Activated CD8-positive, alpha-beta T cell treated with anti-CD3 and anti-CD28 coated beads for 36 hours (primary cell): ENCODE measurements at regions of chr3 and their contacts with region 1.

Region 1: GRCh38 chr3:118884748-118885206 is 149.9 kb downstream of the IGSF11 start:
- DNase-seq: peak; percentile 87
- ATAC-seq: peak; percentile 87
- H3K4me3 Mint-ChIP-seq: no peak overlapping the region
- H3K27ac Mint-ChIP-seq: no peak overlapping the region
- H3K4me1 Mint-ChIP-seq: peaks cover 5% of the 10 kb centered on the region
- H3K27me3 Mint-ChIP-seq: peaks cover 12% of the 10 kb centered on the region
- CTCF ChIP-seq: peak; percentile 92

Region 2: DNA sequence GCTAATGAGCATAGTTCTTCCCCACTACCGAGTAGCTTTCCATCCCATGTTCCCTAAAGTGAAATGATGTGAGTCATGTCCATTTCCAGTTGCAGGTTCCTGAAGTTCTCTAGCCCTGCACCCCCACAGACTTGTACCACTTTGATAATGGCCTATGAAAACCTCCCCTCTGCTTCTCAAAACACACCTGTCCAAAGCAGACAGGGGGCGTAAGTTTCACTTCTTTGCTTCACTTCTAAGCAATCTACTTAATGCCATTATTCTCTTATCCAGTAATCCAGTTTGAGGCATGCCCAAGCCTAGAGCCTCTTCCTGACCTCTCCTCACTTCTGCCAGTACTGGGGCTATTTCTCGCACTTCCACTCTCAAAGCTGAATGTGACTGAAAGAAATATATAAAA is 155.2 kb before region 1 on chr3:
- CTCF ChIA-PET with region 1: no interaction called
- POLR2A ChIA-PET with region 1: no interaction called
- intact Hi-C with region 1: no loop called
- DNase-seq: no peak
- ATAC-seq: no peak
- H3K4me3 Mint-ChIP-seq: no peak overlapping the region
- H3K27ac Mint-ChIP-seq: no peak overlapping the region
- H3K4me1 Mint-ChIP-seq: no peaks in the 10 kb centered on the region
- H3K27me3 Mint-ChIP-seq: no peaks in the 10 kb centered on the region
- CTCF ChIP-seq: no peak

Region 3: GRCh38 chr3:118846176-118846575 is 38.6 kb before region 1 on chr3:
- CTCF ChIA-PET with region 1: no interaction called
- POLR2A ChIA-PET with region 1: no interaction called
- intact Hi-C with region 1: no loop called
- DNase-seq: no peak
- ATAC-seq: no peak
- H3K4me3 Mint-ChIP-seq: no peak overlapping the region
- H3K27ac Mint-ChIP-seq: no peak overlapping the region
- H3K4me1 Mint-ChIP-seq: no peaks in the 10 kb centered on the region
- H3K27me3 Mint-ChIP-seq: no peaks in the 10 kb centered on the region
- CTCF ChIP-seq: no peak

Region 4: DNA sequence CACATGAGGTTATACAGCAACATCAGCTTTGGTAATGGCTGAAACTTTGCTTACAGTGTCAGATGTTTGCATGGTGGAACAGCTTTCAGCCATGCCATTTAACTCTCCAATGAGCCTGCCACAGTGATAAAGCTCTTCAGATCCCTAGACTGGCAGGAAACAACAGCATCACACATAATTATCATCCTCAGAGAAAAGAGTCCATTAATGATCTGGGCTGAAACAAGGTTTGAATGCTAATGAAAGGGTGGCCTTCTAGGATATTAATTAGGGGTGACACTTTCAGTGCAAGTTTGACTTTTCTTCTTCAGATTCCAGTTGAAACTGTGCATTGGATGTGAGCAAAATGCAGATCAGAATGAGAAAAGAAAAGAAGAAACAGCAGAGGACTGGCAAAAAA is 16.7 kb before region 1 on chr3:
- CTCF ChIA-PET with region 1: interaction called, 54 read pairs
- POLR2A ChIA-PET with region 1: no interaction called
- intact Hi-C with region 1: no loop called
- DNase-seq: no peak
- ATAC-seq: no peak
- H3K4me3 Mint-ChIP-seq: no peak overlapping the region
- H3K27ac Mint-ChIP-seq: no peak overlapping the region
- H3K4me1 Mint-ChIP-seq: no peaks in the 10 kb centered on the region
- H3K27me3 Mint-ChIP-seq: peaks cover 18% of the 10 kb centered on the region
- CTCF ChIP-seq: no peak

Region 5: GRCh38 chr3:118955914-118956556 is 71.3 kb after region 1 on chr3:
- CTCF ChIA-PET with region 1: interaction called, 24 read pairs
- POLR2A ChIA-PET with region 1: no interaction called
- intact Hi-C with region 1: no loop called
- DNase-seq: no peak
- ATAC-seq: peak; percentile 50
- H3K4me3 Mint-ChIP-seq: no peak overlapping the region
- H3K27ac Mint-ChIP-seq: peak overlapping the region; percentile 55
- H3K4me1 Mint-ChIP-seq: peaks cover 36% of the 10 kb centered on the region
- H3K27me3 Mint-ChIP-seq: no peaks in the 10 kb centered on the region
- CTCF ChIP-seq: no peak

Region 6: DNA sequence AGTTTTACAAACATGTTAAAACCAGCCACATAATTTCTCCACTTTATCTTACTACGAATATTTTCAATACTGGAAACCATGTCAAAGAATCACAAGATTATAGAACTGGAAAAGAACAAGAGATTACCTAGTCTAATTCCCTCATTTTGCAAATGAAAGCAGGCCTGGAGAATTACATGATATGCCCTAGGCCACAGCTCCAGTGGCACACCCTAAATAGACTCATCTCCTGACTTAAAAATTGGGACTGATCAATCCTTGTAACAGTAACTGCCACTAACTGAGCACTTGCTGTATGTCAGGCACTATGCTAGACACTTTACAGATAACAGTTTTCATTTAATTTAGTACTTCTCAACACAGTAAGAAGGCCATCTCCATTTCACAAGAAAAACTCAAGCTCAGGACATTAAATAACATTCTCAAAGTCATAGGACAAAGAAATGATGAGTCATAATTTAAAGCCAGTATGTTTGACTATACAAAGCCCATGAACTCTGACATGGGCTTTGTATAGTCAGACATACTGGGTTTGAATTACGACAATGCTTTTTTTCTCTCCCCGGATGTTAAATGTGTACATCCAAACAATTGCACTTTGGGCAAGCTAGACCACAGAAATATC is 140.5 kb after region 1 on chr3:
- CTCF ChIA-PET with region 1: interaction called, 305 read pairs
- POLR2A ChIA-PET with region 1: no interaction called
- intact Hi-C with region 1: no loop called
- DNase-seq: no peak
- ATAC-seq: no peak
- H3K4me3 Mint-ChIP-seq: no peak overlapping the region
- H3K27ac Mint-ChIP-seq: no peak overlapping the region
- H3K4me1 Mint-ChIP-seq: peaks cover 1% of the 10 kb centered on the region
- H3K27me3 Mint-ChIP-seq: no peaks in the 10 kb centered on the region
- CTCF ChIP-seq: no peak

Region 7: DNA sequence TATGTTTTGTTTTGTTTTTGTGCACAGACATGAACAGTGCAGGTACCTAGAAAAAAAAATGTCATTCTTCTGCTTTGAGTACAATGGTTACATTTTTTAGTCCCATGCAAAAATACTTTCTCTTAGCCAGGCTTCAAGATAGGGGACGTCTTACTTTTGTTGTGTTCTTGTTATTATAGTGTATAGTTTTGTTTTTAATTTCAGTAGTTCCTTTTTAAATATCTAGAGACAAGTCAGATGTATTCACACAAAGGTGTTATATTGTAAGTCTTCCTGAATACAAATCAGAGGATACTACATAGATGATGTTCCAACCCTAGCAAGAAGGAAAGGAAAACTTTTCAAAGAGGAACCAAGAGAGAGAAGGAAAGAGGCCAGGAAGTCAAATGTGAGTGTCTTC is 178.7 kb after region 1 on chr3:
- CTCF ChIA-PET with region 1: interaction called, 29 read pairs
- POLR2A ChIA-PET with region 1: no interaction called
- intact Hi-C with region 1: no loop called
- DNase-seq: no peak
- ATAC-seq: no peak
- H3K4me3 Mint-ChIP-seq: no peak overlapping the region
- H3K27ac Mint-ChIP-seq: no peak overlapping the region
- H3K4me1 Mint-ChIP-seq: no peaks in the 10 kb centered on the region
- H3K27me3 Mint-ChIP-seq: peaks cover 4% of the 10 kb centered on the region
- CTCF ChIP-seq: no peak

Region 8: GRCh38 chr3:119098619-119099222 is 213.9 kb after region 1 on chr3:
- CTCF ChIA-PET with region 1: interaction called, 399 read pairs
- POLR2A ChIA-PET with region 1: interaction called, 3 read pairs
- intact Hi-C with region 1: loop called (anchors 1 kb)
- DNase-seq: peak; percentile 3
- ATAC-seq: no peak
- H3K4me3 Mint-ChIP-seq: no peak overlapping the region
- H3K27ac Mint-ChIP-seq: no peak overlapping the region
- H3K4me1 Mint-ChIP-seq: no peaks in the 10 kb centered on the region
- H3K27me3 Mint-ChIP-seq: peaks cover 2% of the 10 kb centered on the region
- CTCF ChIP-seq: peak; percentile 89

Region 9: GRCh38 chr3:119352849-119353502 is 468.2 kb after region 1 on chr3:
- CTCF ChIA-PET with region 1: interaction called, 10 read pairs
- POLR2A ChIA-PET with region 1: no interaction called
- intact Hi-C with region 1: no loop called
- DNase-seq: peak; percentile 23
- ATAC-seq: peak; percentile 61
- H3K4me3 Mint-ChIP-seq: no peak overlapping the region
- H3K27ac Mint-ChIP-seq: peak overlapping the region; percentile 45
- H3K4me1 Mint-ChIP-seq: peaks cover 31% of the 10 kb centered on the region
- H3K27me3 Mint-ChIP-seq: no peaks in the 10 kb centered on the region
- CTCF ChIP-seq: peak; percentile 42